Left colon (tissue), 2 donors: ENCODE measurements at regions of chr16 and their contacts with region 1.

Region 1: GRCh38 chr16:87391950-87392822 is at the start of gene MAP1LC3B:
- DNase-seq: peak; percentile 94 to 97
- ATAC-seq: peak; percentile 69
- total RNA-seq, gene MAP1LC3B: 64.5 to 88.0 TPM

Region 2: GRCh38 chr16:86680162-86680561 is 712.0 kb before region 1 on chr16:
- intact Hi-C with region 1: no loop called
- DNase-seq: no peak
- ATAC-seq: no peak

Region 3: DNA sequence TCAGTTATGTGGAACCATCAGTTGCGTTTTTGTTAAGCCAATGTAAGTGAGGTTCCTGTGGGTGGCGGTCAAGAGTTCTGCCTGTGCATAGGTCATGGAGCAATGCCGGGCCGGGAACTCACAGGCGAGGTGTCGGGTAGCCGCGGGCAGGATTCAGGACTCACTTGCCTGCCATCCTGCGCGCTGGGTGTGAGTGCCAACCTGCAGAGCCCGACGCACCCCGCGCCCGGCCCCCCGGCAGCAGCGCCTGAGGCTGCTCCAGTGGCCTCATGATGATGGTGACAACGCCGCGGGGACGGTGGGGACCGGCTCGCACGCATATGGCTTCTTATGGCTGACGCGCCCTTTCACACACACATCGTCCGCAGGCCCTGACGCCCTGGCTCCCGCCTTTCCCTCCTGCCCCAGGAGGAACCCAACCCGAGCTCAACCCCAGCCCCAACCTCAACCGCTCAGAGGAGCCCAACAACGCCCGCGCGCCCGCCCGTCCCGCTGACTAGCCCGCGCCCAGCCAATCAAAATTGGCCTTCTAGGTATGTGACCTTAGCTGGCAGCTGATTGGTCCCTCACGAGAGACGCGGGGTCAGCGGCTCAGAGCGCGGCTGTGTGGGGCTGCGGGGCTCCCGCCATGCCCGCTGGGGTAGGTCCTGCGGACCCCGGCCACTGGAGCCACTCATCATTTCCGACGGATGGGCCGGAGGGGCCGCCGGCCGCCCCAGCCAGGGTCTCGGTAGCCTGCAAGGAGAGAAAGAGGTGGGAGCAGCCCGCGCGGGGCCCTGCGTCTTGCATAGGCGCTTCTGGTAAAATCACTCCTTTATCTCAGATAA is 75.0 kb before region 1 on chr16 and contains the start of gene C16orf95:
- intact Hi-C with region 1: loop called in 1 of 2 experiments (anchors 5 kb)
- DNase-seq: peak; percentile 96 to 98
- ATAC-seq: peak; percentile 94
- total RNA-seq, gene C16orf95: 4.4 to 6.3 TPM

Region 4: DNA sequence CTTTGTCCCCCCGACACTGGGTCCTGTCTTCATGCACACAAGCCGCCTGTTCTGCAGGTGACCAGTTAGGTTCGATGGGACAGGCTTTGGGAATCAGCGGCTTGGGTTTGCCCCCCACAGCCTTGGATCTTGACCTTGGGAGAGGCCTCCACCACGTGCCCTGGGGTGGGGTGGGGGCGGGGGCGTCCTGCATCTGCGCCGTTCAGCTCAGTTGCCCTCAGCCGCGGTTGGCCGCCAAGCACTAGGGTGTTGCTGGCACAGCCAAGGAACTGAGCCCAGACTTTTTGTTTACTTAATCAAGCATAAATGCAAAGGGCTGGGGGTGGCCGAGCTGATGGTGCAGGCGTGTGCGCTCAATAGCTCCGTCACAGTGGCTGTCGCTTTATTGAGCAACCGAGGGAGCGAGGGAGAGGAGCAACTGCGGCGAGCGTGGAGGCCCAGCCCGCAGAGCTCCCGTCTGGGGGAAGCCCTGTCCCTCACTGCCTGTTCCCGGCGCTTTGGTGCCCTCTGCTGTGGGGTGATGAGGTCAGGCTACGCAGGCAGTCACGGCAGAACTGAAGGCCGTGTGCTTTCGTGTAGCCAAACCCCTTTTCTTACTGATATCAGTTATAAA is 244.0 kb after region 1 on chr16:
- intact Hi-C with region 1: loop called in 1 of 2 experiments (anchors 10 kb)
- DNase-seq: peak; percentile 73 to 86
- ATAC-seq: peak; percentile 95